ENCODE measurements at regions of chr14 and their contacts with region 1.

Region 1: DNA sequence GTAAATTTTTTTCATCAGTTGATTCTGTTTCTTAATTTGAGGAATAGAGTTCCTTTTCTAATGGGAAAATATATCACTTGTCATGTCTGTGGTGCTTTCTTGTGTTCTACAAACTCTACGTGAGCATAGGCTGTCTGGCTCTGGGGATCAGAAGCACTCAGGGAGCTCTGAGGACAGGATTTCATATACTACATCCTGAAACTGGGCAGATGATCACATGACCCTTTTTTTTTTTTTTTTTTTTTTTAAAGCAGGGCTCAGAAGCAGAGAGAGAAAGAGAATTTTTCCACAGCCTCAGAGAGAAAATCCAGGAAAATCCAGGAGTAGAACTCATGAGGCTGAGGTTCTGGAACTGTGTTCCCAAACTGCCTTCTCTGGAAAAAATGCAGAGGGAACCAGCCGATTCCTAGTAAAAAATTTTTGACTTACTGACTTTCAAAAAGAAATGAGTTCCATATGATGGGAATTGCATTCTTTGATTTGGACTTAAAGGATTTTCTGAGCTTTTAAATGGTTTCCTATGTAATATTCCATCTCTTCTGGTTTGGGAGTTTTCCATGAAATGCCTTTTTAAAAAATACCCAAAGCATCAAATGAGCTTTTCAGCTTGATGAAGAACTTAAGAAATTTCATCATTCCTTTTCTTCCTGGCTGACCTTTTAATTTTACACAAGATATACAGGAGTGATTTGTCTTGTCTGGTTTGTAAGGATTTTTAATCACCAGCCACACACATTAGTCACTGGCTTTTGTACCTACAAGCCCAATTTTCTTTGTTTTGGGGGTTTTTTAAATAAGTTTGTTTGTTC is 183.1 kb upstream of the HIF1A start:
- DNase-seq: peak in 1 of 2 experiments; percentile 24
- H3K4me3 ChIP-seq: no peak overlapping the region
- H3K27ac ChIP-seq: peak overlapping the region; percentile 30
- H3K4me1 ChIP-seq: peaks cover 54% of the 10 kb centered on the region
- H3K27me3 ChIP-seq: no peaks in the 10 kb centered on the region
- CTCF ChIP-seq: no peak

Region 2: DNA sequence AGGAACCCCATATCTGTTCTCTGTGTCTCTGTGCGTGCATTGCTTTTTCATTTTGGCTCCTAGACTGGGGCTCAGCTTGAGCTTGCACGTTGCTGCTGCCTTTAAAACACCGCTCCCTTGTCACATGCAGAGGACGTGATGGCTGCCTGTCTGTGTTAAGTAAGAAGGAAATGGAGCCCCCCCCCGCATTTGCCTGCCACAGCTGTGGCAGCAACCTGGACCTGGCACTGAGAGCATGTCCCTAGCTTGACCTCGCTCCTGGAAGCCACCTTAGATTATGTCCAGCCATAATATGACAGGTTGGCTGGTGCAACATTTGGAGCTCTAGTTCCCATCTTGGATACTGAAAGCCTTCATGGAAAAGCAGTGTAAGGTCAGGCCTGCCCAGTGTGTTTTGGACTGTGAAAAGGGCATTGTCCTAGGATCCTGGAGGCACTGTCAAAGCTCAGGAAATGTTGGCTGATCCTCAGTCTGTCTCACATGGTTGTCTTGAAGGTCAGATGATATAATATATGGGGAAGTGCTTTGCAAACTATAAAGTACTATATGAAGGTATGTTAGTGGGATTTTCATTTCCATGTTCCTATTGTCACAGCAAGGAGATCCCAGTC is 117.0 kb before region 1 on chr14:
- CTCF ChIA-PET with region 1: no interaction called
- POLR2A ChIA-PET with region 1: no interaction called
- intact Hi-C with region 1: no loop called
- DNase-seq: no peak
- H3K4me3 ChIP-seq: no peak overlapping the region
- H3K27ac ChIP-seq: no peak overlapping the region
- H3K4me1 ChIP-seq: peaks cover 10% of the 10 kb centered on the region
- H3K27me3 ChIP-seq: no peaks in the 10 kb centered on the region
- CTCF ChIP-seq: no peak

Region 3: GRCh38 chr14:61537563-61538463 is 25.6 kb after region 1 on chr14:
- CTCF ChIA-PET with region 1: no interaction called
- POLR2A ChIA-PET with region 1: no interaction called
- intact Hi-C with region 1: loop called (anchors 1 kb)
- DNase-seq: peak; percentile 81 to 100
- H3K4me3 ChIP-seq: peak overlapping the region; percentile 35; the same call in 1 of the 2 replicates
- H3K27ac ChIP-seq: peak overlapping the region; percentile 98
- H3K4me1 ChIP-seq: peaks cover 62% of the 10 kb centered on the region
- H3K27me3 ChIP-seq: no peaks in the 10 kb centered on the region
- CTCF ChIP-seq: no peak

Region 4: GRCh38 chr14:61547186-61548086 is 35.2 kb after region 1 on chr14:
- CTCF ChIA-PET with region 1: no interaction called
- POLR2A ChIA-PET with region 1: no interaction called
- intact Hi-C with region 1: loop called (anchors 1 kb)
- DNase-seq: peak; percentile 67 to 85
- H3K4me3 ChIP-seq: no peak overlapping the region
- H3K27ac ChIP-seq: peak overlapping the region; percentile 85
- H3K4me1 ChIP-seq: peaks cover 37% of the 10 kb centered on the region
- H3K27me3 ChIP-seq: no peaks in the 10 kb centered on the region
- CTCF ChIP-seq: no peak

Measured in PC-9 (cell line).